Thyroid gland (tissue), 4 donors: ENCODE measurements at regions of chr17 and their contacts with region 1.

Region 1: GRCh38 chr17:4407851-4408250 is 25.9 kb upstream of the SPNS3 start:
- DNase-seq: no peak
- H3K4me3 ChIP-seq: no peak overlapping the region
- H3K27ac ChIP-seq: no peak overlapping the region
- H3K4me1 ChIP-seq: peaks cover 0 to 2% of the 10 kb centered on the region in 2 donors
- H3K27me3 ChIP-seq: no peaks in the 10 kb centered on the region
- CTCF ChIP-seq: no peak
- POLR2A ChIP-seq: no peak

Region 2: GRCh38 chr17:4199818-4200402 is 207.9 kb before region 1 on chr17:
- intact Hi-C with region 1: loop called (anchors 5 kb)
- DNase-seq: peak; percentile 10 to 27
- H3K4me3 ChIP-seq: no peak overlapping the region
- H3K27ac ChIP-seq: no peak overlapping the region
- H3K4me1 ChIP-seq: peaks cover 4% of the 10 kb centered on the region in 2 donors
- H3K27me3 ChIP-seq: no peaks in the 10 kb centered on the region
- CTCF ChIP-seq: peak; percentile 32 to 72 (median 56)
- POLR2A ChIP-seq: no peak

Region 3: GRCh38 chr17:4329838-4330237 is 78.0 kb before region 1 on chr17:
- intact Hi-C with region 1: no loop called
- DNase-seq: no peak
- H3K4me3 ChIP-seq: no peak overlapping the region
- H3K27ac ChIP-seq: no peak overlapping the region
- H3K4me1 ChIP-seq: peaks cover 2 to 5% of the 10 kb centered on the region in 2 donors
- H3K27me3 ChIP-seq: no peaks in the 10 kb centered on the region
- CTCF ChIP-seq: no peak
- POLR2A ChIP-seq: no peak